HEK293 (cell line): ENCODE measurements at regions of chr17 and their contacts with region 1.

Region 1: GRCh38 chr17:20226814-20227482 is 217.8 kb downstream of the SPECC1 start:
- H3K4me3 ChIP-seq: no peak overlapping the region
- H3K27ac ChIP-seq: no peak overlapping the region
- H3K4me1 ChIP-seq: peaks cover 4% of the 10 kb centered on the region; the same call in 1 of the 2 replicates
- CTCF ChIP-seq: peak; percentile 82

Region 2: DNA sequence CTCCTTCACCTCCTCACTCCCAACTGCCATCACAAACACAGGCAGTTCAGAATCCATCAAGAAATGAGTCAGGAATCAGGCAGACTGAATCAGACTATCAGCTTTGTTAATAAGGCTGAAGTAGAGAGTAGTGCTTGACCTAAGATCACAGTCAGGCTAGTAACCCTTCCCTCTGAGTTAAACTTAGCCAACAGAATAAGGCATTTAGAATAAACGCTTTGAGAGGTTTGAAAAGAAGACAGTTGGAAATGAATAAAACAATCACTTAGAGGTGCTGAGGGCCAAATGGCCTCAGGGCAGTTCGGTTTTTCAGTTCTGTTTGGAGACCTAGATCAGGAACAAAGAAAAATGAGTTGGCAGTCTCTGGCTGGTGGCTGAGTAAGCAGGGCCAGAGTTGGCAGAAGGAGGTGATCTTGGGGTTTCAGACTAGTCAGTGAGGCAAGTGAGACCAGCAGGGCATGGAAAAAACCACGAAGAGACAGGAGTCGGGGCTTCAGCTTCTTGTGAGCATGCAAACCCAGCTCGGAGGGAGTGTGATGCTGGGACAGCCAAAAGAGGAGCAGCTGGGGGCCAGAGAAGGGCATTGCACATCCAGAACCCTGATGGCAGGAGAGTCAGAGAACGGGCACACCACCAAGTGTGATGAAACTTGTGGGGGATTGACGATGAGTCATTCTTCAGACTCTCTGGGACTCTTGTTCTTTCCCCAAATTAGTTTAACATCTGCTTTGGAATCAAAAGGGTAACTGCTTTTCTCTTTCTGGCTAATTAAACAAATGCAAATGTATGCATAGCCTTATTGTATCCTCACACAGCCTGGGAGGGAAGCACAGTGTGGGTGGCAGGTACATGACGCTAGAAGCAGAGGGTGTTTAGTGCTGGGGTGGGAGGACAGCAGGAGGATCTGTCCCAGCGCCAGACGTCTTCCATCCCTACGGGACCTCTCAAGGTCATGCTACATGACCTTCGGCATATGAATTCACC is 163.0 kb before region 1 on chr17:
- CTCF ChIA-PET with region 1: no interaction called
- POLR2A ChIA-PET with region 1: no interaction called
- H3K4me3 ChIP-seq: no peak overlapping the region
- H3K27ac ChIP-seq: peak overlapping the region; percentile 22; the same call in 1 of the 2 replicates
- H3K4me1 ChIP-seq: peaks cover 15% of the 10 kb centered on the region
- CTCF ChIP-seq: no peak

Region 3: GRCh38 chr17:20121359-20122253 is 105.3 kb before region 1 on chr17:
- CTCF ChIA-PET with region 1: interaction called, 56 read pairs
- POLR2A ChIA-PET with region 1: no interaction called
- H3K4me3 ChIP-seq: no peak overlapping the region
- H3K27ac ChIP-seq: no peak overlapping the region
- H3K4me1 ChIP-seq: no peaks in the 10 kb centered on the region
- CTCF ChIP-seq: peak; percentile 66

Region 4: GRCh38 chr17:20156196-20157000 is 70.5 kb before region 1 on chr17:
- CTCF ChIA-PET with region 1: interaction called, 12 read pairs
- POLR2A ChIA-PET with region 1: no interaction called
- H3K4me3 ChIP-seq: peak overlapping the region; percentile 82
- H3K27ac ChIP-seq: peak overlapping the region; percentile 61; the same call in 1 of the 2 replicates
- H3K4me1 ChIP-seq: peaks cover 3% of the 10 kb centered on the region; the same call in 1 of the 2 replicates
- CTCF ChIP-seq: no peak

Region 5: DNA sequence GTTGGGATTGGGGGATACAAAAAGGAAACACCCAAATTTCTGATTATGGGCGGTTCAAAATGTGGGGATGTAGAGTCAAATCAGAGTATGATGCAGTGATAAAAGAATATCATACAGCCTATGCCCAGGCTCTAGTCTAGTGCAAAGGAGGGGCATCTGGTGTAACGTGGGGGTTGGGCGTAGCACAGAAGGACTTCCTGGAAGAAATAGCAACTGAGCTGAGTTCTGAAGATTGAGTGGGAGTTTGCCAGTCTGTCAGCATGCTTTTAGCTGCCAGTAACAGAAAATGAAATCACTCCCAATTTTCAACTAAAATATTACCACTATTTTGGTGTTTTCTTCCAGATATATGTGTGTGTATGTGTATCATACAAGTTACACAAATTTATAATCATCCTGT is 20.9 kb before region 1 on chr17:
- CTCF ChIA-PET with region 1: interaction called, 25 read pairs
- POLR2A ChIA-PET with region 1: no interaction called
- H3K4me3 ChIP-seq: no peak overlapping the region
- H3K27ac ChIP-seq: no peak overlapping the region
- H3K4me1 ChIP-seq: peaks cover 9% of the 10 kb centered on the region; the same call in 1 of the 2 replicates
- CTCF ChIP-seq: no peak

Region 6: GRCh38 chr17:20213449-20213848 is 13.5 kb before region 1 on chr17:
- CTCF ChIA-PET with region 1: interaction called, 25 read pairs
- POLR2A ChIA-PET with region 1: no interaction called
- H3K4me3 ChIP-seq: no peak overlapping the region
- H3K27ac ChIP-seq: no peak overlapping the region
- H3K4me1 ChIP-seq: no peaks in the 10 kb centered on the region
- CTCF ChIP-seq: no peak

Region 7: GRCh38 chr17:20315821-20316220 is 88.9 kb after region 1 on chr17:
- CTCF ChIA-PET with region 1: interaction called, 40 read pairs
- POLR2A ChIA-PET with region 1: no interaction called
- H3K4me3 ChIP-seq: no peak overlapping the region
- H3K27ac ChIP-seq: no peak overlapping the region
- H3K4me1 ChIP-seq: no peaks in the 10 kb centered on the region
- CTCF ChIP-seq: no peak